Activated B cell treated with CpG ODN at 0.5 μM for 24 hours (primary cell): ENCODE measurements at regions of chr6 and their contacts with region 1.

Region 1: DNA sequence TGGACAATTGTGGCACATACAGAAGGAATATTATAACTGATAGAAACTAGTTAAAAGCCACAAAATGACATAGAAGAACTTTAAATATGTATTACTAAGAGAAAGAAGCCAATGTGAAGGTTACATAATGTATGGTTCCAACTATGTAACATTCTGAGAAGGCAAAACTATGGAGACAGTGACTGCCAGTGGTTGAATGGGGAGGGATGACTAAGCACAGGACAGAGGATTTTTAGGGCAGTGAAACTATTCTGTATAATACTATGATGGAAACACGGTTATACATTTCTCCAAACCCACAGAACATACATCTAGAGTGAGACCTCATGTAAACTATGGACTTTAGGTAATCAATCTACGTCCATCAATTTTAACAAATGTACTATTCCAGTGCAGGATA is 22.4 kb downstream of the SYNCRIP start:
- DNase-seq: no peak
- ATAC-seq: no peak
- H3K4me3 Mint-ChIP-seq: no peak overlapping the region
- H3K27ac Mint-ChIP-seq: no peak overlapping the region
- H3K4me1 Mint-ChIP-seq: peaks cover 8% of the 10 kb centered on the region
- H3K27me3 Mint-ChIP-seq: no peaks in the 10 kb centered on the region
- CTCF ChIP-seq: no peak

Region 2: DNA sequence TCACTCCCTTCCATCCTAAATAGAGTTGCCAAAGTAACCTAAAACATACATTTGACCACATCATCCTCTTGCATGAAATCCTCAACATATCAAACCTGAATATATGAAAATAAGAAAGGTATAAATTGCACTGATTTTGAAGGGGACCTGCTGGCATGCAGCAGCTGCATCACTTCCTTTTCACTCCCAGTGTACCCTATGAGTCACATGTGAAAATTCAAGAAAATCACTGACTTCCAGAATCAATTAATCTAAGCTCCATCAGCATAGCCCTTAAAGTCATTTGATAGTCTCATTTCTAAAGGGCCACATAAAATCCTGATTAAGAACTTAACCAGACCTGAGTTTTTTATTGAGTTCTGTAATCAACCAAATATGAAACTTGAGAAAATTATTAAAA is 51.0 kb before region 1 on chr6:
- CTCF ChIA-PET with region 1: no interaction called
- POLR2A ChIA-PET with region 1: no interaction called
- intact Hi-C with region 1: no loop called
- DNase-seq: no peak
- ATAC-seq: no peak
- H3K4me3 Mint-ChIP-seq: no peak overlapping the region
- H3K27ac Mint-ChIP-seq: no peak overlapping the region
- H3K4me1 Mint-ChIP-seq: no peaks in the 10 kb centered on the region
- H3K27me3 Mint-ChIP-seq: no peaks in the 10 kb centered on the region
- CTCF ChIP-seq: no peak

Region 3: DNA sequence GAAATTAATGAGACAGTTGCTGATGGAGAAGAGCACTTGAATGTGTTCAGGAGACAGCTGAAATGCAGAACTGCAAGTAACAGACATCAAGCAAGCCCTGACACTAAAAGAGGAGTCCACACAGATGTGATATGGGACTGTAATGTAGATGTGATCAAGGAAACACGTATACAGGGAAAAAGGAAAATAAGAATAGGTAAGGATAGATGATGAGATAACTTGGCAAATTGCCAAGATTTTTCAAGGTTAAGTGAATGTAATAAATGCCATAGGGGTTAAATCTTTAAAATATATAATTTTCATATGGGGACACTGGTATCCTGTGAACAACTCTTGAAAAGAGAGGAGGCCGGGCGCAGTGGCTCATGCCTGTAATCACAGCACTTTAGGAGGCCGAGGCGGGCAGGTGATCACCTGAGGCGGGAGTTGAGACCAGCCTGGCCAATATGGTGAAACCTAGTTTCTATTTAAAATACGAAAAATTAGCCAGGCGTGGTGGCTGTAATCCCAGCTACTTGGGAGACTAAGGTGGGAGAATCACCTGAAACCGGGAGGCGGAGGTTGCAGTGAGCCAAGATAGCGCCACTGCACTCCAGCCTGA is 19.5 kb before region 1 on chr6:
- CTCF ChIA-PET with region 1: no interaction called
- POLR2A ChIA-PET with region 1: no interaction called
- intact Hi-C with region 1: loop called (anchors 2 kb)
- DNase-seq: no peak
- ATAC-seq: no peak
- H3K4me3 Mint-ChIP-seq: no peak overlapping the region
- H3K27ac Mint-ChIP-seq: peak overlapping the region; percentile 9
- H3K4me1 Mint-ChIP-seq: no peaks in the 10 kb centered on the region
- H3K27me3 Mint-ChIP-seq: no peaks in the 10 kb centered on the region
- CTCF ChIP-seq: no peak